MCF 10A (cell line): ENCODE measurements at regions of chr10 and their contacts with region 1.

Region 1: DNA sequence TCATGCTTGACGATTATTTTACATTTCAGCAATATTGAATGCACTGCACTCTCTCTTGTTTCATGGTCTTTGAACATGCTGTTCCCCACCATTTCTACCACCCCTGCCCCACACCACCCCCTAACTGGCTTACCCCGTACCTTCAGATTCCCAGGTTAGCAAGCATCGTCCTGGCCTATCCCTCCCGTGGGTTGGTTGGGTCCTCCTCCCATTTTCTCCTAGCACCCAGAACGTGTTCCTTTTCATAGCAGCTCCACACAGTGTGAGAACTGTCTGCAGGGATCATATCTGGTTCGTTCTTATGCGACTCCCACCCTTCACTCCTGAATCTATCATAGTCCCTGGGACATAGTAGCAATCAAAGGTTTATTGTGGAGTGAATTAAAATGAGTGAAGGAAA is 48.6 kb downstream of the C10orf90 start:
- DNase-seq: no peak
- H3K4me3 Mint-ChIP-seq: no peak overlapping the region
- H3K27ac Mint-ChIP-seq: no peak overlapping the region
- H3K4me1 Mint-ChIP-seq: peaks cover 6% of the 10 kb centered on the region
- H3K27me3 Mint-ChIP-seq: peaks cover 14% of the 10 kb centered on the region
- CTCF ChIP-seq: no peak

Region 2: GRCh38 chr10:126640401-126640800 is 18.6 kb after region 1 on chr10:
- CTCF ChIA-PET with region 1: no interaction called
- POLR2A ChIA-PET with region 1: no interaction called
- intact Hi-C with region 1: loop called (anchors 2 kb)
- DNase-seq: peak; percentile 81
- H3K4me3 Mint-ChIP-seq: no peak overlapping the region
- H3K27ac Mint-ChIP-seq: no peak overlapping the region
- H3K4me1 Mint-ChIP-seq: peaks cover 14% of the 10 kb centered on the region
- H3K27me3 Mint-ChIP-seq: no peaks in the 10 kb centered on the region
- CTCF ChIP-seq: no peak